Panc1 (cell line): ENCODE measurements at regions of chr9 and their contacts with region 1.

Region 1: DNA sequence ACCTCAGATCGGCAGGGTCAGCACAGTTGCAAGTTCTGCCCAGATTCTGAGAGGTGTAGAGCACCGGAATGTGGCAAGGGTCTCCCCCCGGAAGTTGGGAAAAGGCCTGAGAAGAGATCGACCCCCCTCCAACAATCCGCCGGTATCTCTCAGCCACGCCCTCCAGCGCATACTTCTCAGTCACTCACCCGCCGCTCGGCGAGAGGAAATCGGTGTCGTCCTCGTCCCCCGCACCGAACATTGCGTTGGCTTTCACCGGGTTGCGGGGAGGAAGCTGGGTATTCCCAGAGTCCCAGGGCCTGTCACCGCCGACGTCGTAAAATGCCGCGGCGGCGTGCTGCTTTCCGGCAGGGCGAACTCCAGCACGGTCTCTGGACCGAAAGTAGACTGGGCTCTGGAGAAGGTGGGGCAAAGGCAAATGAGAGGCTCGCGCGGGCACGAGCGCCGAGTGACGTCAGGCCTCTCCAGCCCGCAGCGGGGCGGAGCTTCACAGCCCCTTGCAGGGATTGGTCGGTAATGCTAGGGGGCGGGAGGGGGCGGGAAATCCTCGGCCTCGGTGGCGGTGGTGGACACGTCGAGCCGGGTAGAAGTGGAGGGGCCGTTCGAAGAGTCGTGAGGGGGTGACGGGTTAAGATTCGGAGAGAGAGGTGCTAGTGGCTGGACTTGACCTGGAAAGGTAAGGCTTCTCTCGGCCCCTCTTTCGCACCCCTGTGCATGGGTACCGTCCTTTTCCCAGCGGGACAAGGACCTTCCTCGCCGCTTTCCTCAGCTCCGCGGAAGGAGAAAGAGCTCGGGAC is at the starts of genes FKBP15 and SLC31A1:
- DNase-seq: peak; percentile 84
- ATAC-seq: peak; percentile 99
- H3K4me3 ChIP-seq: peak within 1 kb of the TSS; percentile 95 to 98
- H3K27ac ChIP-seq: peak within 1 kb of the TSS; percentile 85
- H3K4me1 ChIP-seq: peaks cover 8% of the 10 kb centered on the region
- H3K27me3 ChIP-seq: no peaks in the 10 kb centered on the region
- CTCF ChIP-seq: no peak
- total RNA-seq, gene FKBP15: 17.6 TPM
- total RNA-seq, gene SLC31A1: 17.6 TPM

Region 2: GRCh38 chr9:113255438-113255837 is 34.2 kb after region 1 on chr9:
- CTCF ChIA-PET with region 1: no interaction called
- POLR2A ChIA-PET with region 1: interaction called, 11 read pairs
- in situ Hi-C with region 1: no loop called
- intact Hi-C with region 1: no loop called
- DNase-seq: no peak
- ATAC-seq: no peak
- H3K4me3 ChIP-seq: no peak overlapping the region
- H3K27ac ChIP-seq: no peak overlapping the region
- H3K4me1 ChIP-seq: no peaks in the 10 kb centered on the region
- H3K27me3 ChIP-seq: no peaks in the 10 kb centered on the region
- CTCF ChIP-seq: no peak

Region 3: DNA sequence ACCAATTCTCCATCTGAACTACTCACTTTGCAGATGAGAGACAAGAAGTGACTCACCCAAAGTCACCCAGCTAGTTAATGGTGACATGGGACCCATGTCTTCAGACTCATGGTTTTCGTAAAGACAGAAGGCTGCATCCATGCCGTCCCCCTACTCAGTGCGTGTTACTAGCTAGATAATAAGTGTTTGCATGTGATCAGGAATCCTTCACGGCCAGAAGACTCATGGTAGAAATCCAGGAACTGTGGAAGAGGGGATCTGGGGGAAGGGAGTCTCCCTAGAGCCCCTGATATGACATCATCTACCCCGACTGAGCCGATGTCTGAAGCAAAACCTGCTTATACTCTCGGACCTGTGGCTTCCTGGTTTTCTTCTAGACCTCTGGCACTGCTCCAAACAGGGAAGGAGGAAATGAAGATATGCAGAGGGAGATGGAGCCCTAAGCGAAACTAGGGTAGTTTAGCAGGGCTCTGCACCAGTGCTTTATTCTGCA is 78.6 kb after region 1 on chr9:
- CTCF ChIA-PET with region 1: no interaction called
- POLR2A ChIA-PET with region 1: no interaction called
- in situ Hi-C with region 1: no loop called
- intact Hi-C with region 1: no loop called
- DNase-seq: no peak
- ATAC-seq: no peak
- H3K4me3 ChIP-seq: no peak overlapping the region
- H3K27ac ChIP-seq: no peak overlapping the region
- H3K4me1 ChIP-seq: no peaks in the 10 kb centered on the region
- H3K27me3 ChIP-seq: no peaks in the 10 kb centered on the region; the same call in 1 of the 2 replicates
- CTCF ChIP-seq: no peak

Region 4: DNA sequence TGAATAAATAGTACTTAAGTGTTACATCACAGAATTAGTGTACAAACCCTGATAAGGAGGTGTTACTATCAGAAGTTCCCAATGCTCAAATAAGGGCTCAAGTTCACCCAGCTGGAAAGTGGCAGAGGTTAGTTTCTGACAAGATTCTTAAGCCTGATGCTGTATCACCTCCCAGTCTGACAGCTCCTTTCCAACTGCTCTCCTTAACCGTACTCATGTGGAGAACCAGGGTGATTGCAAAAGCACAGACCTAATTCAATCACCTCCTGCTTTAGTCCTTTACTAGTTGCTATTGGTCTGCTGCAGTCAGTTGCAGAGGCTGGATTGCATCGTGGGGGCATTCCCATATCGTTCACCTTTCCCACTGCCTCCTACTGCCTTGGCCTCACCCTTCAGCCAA is 554.5 kb after region 1 on chr9:
- CTCF ChIA-PET with region 1: no interaction called
- POLR2A ChIA-PET with region 1: no interaction called
- in situ Hi-C with region 1: no loop called
- intact Hi-C with region 1: no loop called
- DNase-seq: no peak
- ATAC-seq: no peak
- H3K4me3 ChIP-seq: no peak overlapping the region
- H3K27ac ChIP-seq: no peak overlapping the region
- H3K4me1 ChIP-seq: no peaks in the 10 kb centered on the region
- H3K27me3 ChIP-seq: no peaks in the 10 kb centered on the region
- CTCF ChIP-seq: no peak